ENCODE measurements at regions of chr10 and their contacts with region 1.

Region 1: GRCh38 chr10:84008878-84009277 is 130.4 kb upstream of the GHITM start:
- DNase-seq: peak in 1 of 2 experiments; percentile 35
- H3K4me3 ChIP-seq: no peak overlapping the region
- H3K4me3 Mint-ChIP-seq: no peak overlapping the region
- H3K27ac Mint-ChIP-seq: no peak overlapping the region
- H3K4me1 ChIP-seq: no peaks in the 10 kb centered on the region; the same call in 1 of the 2 replicates
- H3K4me1 Mint-ChIP-seq: peaks cover 5% of the 10 kb centered on the region
- H3K27me3 ChIP-seq: no peaks in the 10 kb centered on the region
- H3K27me3 Mint-ChIP-seq: peaks cover 19% of the 10 kb centered on the region
- CTCF ChIP-seq: peak; percentile 58 to 80

Region 2: GRCh38 chr10:83801983-83802382 is 206.9 kb before region 1 on chr10:
- CTCF ChIA-PET with region 1: no interaction called
- POLR2A ChIA-PET with region 1: no interaction called
- intact Hi-C with region 1: loop called (anchors 10 kb)
- DNase-seq: no peak
- H3K4me3 ChIP-seq: no peak overlapping the region
- H3K4me3 Mint-ChIP-seq: no peak overlapping the region
- H3K27ac Mint-ChIP-seq: no peak overlapping the region
- H3K4me1 ChIP-seq: no peaks in the 10 kb centered on the region
- H3K4me1 Mint-ChIP-seq: no peaks in the 10 kb centered on the region
- H3K27me3 ChIP-seq: no peaks in the 10 kb centered on the region
- H3K27me3 Mint-ChIP-seq: peaks cover 2% of the 10 kb centered on the region
- CTCF ChIP-seq: peak in 1 of 2 experiments; percentile 37

Region 3: GRCh38 chr10:83897626-83898025 is 111.3 kb before region 1 on chr10:
- CTCF ChIA-PET with region 1: no interaction called
- POLR2A ChIA-PET with region 1: no interaction called
- intact Hi-C with region 1: no loop called
- DNase-seq: no peak
- H3K4me3 ChIP-seq: no peak overlapping the region
- H3K4me3 Mint-ChIP-seq: no peak overlapping the region
- H3K27ac Mint-ChIP-seq: no peak overlapping the region
- H3K4me1 ChIP-seq: no peaks in the 10 kb centered on the region
- H3K4me1 Mint-ChIP-seq: no peaks in the 10 kb centered on the region
- H3K27me3 ChIP-seq: no peaks in the 10 kb centered on the region
- H3K27me3 Mint-ChIP-seq: no peaks in the 10 kb centered on the region
- CTCF ChIP-seq: no peak

Region 4: GRCh38 chr10:83991986-83992753 is 16.7 kb before region 1 on chr10:
- CTCF ChIA-PET with region 1: no interaction called
- POLR2A ChIA-PET with region 1: no interaction called
- intact Hi-C with region 1: no loop called
- DNase-seq: peak; percentile 36 to 45
- H3K4me3 ChIP-seq: no peak overlapping the region
- H3K4me3 Mint-ChIP-seq: no peak overlapping the region
- H3K27ac Mint-ChIP-seq: no peak overlapping the region
- H3K4me1 ChIP-seq: no peaks in the 10 kb centered on the region
- H3K4me1 Mint-ChIP-seq: no peaks in the 10 kb centered on the region
- H3K27me3 ChIP-seq: no peaks in the 10 kb centered on the region
- H3K27me3 Mint-ChIP-seq: peaks cover 8% of the 10 kb centered on the region
- CTCF ChIP-seq: peak in 1 of 2 experiments; percentile 46

Measured in Caco-2 (cell line).